Naive thymus-derived CD4-positive, alpha-beta T cell (primary cell): ENCODE measurements at regions of chr21 and their contacts with region 1.

Region 1: GRCh38 chr21:44011980-44012527 is at the start of gene TRAPPC10:
- DNase-seq: peak; percentile 60 to 91 (median 73)
- ATAC-seq: peak; percentile 78
- H3K4me3 ChIP-seq: peak within 1 kb of the TSS; percentile 63
- H3K4me3 Mint-ChIP-seq: peak within 1 kb of the TSS; percentile 87 to 97 (median 93)
- H3K27ac ChIP-seq: peak within 1 kb of the TSS; percentile 92
- H3K27ac Mint-ChIP-seq: peak within 1 kb of the TSS; percentile 92 to 96 (median 95)
- H3K4me1 ChIP-seq: peaks cover 24 to 34% of the 10 kb centered on the region in 2 donors
- H3K4me1 Mint-ChIP-seq: peaks cover 38 to 51% (median 50%) of the 10 kb centered on the region in 7 donors
- H3K27me3 ChIP-seq: no peaks in the 10 kb centered on the region
- H3K27me3 Mint-ChIP-seq: no peaks in the 10 kb centered on the region
- total RNA-seq, gene TRAPPC10: 80.6 to 119 (median 93.2) TPM

Region 2: GRCh38 chr21:44024887-44025362 is 12.9 kb after region 1 on chr21:
- CTCF ChIA-PET with region 1: no interaction called
- POLR2A ChIA-PET with region 1: interaction called, 9 read pairs
- intact Hi-C with region 1: loop called in 1 of 2 experiments (anchors 2 kb)
- DNase-seq: no peak
- ATAC-seq: peak; percentile 54
- H3K4me3 ChIP-seq: no peak overlapping the region
- H3K4me3 Mint-ChIP-seq: peak overlapping the region in 8 of 10 donors; percentile 39 to 74 (median 52)
- H3K27ac ChIP-seq: no peak overlapping the region
- H3K27ac Mint-ChIP-seq: peak overlapping the region in 8 of 9 donors; percentile 5 to 86 (median 72)
- H3K4me1 ChIP-seq: peaks cover 59 to 62% of the 10 kb centered on the region in 2 donors
- H3K4me1 Mint-ChIP-seq: peaks cover 68 to 97% (median 87%) of the 10 kb centered on the region in 7 donors
- H3K27me3 ChIP-seq: no peaks in the 10 kb centered on the region
- H3K27me3 Mint-ChIP-seq: no peaks in the 10 kb centered on the region

Region 3: DNA sequence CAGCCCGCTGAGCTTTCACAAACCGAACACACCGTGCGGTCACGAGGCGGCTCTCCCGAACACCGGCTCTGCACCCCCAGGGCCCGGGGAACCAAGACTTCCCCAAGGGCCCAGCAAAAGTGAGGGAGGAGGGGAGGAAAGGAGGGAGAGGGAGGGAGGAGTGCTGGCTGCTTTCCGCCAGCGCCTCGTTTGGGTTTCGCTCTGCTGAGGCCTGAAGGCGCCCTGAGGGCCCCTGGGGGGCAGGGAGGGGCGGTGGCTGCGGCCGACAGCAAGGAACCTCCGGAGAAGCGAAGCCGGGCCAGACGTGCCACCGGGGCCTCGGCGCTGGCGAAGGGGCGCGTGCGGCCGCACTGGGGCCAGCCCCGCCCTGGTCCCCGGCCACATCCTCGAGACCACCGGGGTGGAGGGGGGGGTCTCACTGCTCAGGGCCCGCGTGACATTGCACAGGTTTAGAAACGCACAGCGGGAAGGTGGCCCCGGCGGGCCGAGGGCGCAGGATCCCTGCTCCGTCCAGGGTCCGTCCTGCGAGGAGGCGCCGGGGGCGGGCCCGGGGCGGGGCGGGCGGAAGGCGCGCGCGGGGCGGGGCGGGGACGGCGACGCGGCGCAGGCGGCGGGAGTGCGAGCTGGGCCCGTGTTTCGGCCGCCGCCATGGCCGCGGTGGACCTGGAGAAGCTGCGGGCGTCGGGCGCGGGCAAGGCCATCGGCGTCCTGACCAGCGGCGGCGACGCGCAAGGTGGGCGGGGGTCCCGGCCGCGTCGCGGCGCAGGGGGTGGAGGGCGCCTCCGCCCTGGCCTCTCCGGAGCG is 287.6 kb after region 1 on chr21 and contains the start of gene PFKL:
- CTCF ChIA-PET with region 1: no interaction called
- POLR2A ChIA-PET with region 1: interaction called, 5 read pairs
- intact Hi-C with region 1: loop called in 1 of 2 experiments (anchors 2 kb)
- DNase-seq: peak; percentile 28 to 79 (median 47)
- ATAC-seq: peak; percentile 79
- H3K4me3 ChIP-seq: peak within 1 kb of the TSS; percentile 59
- H3K4me3 Mint-ChIP-seq: peak within 1 kb of the TSS; percentile 85 to 95 (median 91)
- H3K27ac ChIP-seq: peak within 1 kb of the TSS; percentile 80
- H3K27ac Mint-ChIP-seq: peak within 1 kb of the TSS; percentile 91 to 97 (median 94)
- H3K4me1 ChIP-seq: peaks cover 30 to 57% of the 10 kb centered on the region in 2 donors
- H3K4me1 Mint-ChIP-seq: peaks cover 36 to 65% (median 49%) of the 10 kb centered on the region in 7 donors
- H3K27me3 ChIP-seq: no peaks in the 10 kb centered on the region
- H3K27me3 Mint-ChIP-seq: no peaks in the 10 kb centered on the region
- total RNA-seq, gene PFKL: 107 to 196 (median 122) TPM

Region 4: GRCh38 chr21:44801468-44802395 is 789.7 kb after region 1 on chr21 and contains the start of gene UBE2G2:
- CTCF ChIA-PET with region 1: no interaction called
- POLR2A ChIA-PET with region 1: no interaction called
- intact Hi-C with region 1: loop called in 1 of 2 experiments (anchors 5 kb)
- DNase-seq: peak; percentile 79 to 95 (median 88)
- ATAC-seq: peak; percentile 95
- H3K4me3 ChIP-seq: peak within 1 kb of the TSS; percentile 92
- H3K4me3 Mint-ChIP-seq: peak within 1 kb of the TSS; percentile 88 to 100 (median 96)
- H3K27ac ChIP-seq: peak within 1 kb of the TSS; percentile 85
- H3K27ac Mint-ChIP-seq: peak within 1 kb of the TSS; percentile 85 to 99 (median 94)
- H3K4me1 ChIP-seq: peaks cover 19 to 27% of the 10 kb centered on the region in 2 donors
- H3K4me1 Mint-ChIP-seq: peaks cover 24 to 53% (median 45%) of the 10 kb centered on the region in 7 donors
- H3K27me3 ChIP-seq: no peaks in the 10 kb centered on the region
- H3K27me3 Mint-ChIP-seq: no peaks in the 10 kb centered on the region
- total RNA-seq, gene UBE2G2: 108 to 150 (median 129) TPM